ENCODE measurements at regions of chr10 and their contacts with region 1.

Region 1: DNA sequence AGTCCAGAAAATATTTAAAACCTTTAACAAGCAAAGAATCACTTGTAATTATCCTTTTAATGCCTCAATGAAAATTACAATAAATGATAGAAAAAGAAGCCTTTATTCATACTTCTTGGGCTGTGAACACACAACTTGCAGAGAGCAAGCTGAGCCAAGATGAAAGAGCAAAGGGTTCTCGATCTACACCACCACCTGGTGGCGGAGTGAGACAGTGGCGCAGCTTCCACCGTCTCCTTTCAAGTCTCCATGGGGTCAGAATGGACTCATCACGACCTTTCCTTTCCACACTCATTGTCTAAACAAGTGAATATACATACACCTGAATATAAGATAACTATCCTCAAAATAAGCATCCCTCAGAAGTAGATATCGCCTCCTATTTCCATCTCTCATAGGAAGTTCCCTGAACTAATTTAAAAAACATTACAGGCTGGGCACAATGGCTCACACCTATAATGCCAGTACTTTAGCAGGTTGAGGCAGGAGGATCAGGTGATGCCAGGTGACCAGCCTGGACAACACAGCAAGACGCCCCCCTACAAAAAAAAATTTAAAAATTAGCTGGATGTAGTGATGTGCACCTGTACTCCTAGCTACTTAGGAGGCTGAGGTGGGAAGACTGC is 40.7 kb downstream of the ATE1 start:
- DNase-seq: peak; percentile 68
- ATAC-seq: peak; percentile 87
- H3K4me3 ChIP-seq: no peak overlapping the region
- H3K27ac ChIP-seq: no peak overlapping the region
- H3K4me1 ChIP-seq: peaks cover 8% of the 10 kb centered on the region; the same call in 1 of the 2 replicates
- H3K27me3 ChIP-seq: no peaks in the 10 kb centered on the region
- CTCF ChIP-seq: peak; percentile 78

Region 2: DNA sequence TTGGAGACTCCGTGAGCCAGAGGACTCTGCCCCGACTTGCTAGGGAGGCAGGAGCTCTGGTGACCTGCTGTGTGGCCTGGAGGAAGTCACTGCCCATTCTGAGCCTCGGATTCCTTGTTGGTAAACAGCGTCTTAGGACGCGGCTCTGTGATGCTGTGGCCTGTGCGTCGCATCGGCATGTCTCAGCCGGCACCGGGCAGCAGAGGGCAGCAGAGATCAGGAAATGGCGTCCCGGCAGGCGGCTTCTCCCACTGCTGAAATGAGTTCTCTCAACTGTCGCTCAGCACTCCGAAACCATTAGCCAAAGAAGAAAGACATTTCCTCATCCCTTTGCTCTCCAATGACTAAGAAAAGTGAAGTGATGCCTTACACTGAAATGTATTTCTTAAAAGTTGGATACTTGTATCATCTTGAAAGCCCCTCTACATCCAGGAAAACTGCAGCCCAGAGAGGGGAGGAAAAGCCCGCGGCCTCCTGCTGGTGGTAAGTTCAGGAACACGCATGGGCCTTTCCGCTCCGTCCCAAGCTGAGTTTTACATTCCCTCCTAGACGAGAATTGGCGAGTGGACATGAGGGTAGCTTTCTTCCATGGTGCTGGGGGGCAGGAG is 944.2 kb before region 1 on chr10:
- CTCF ChIA-PET with region 1: no interaction called
- POLR2A ChIA-PET with region 1: no interaction called
- intact Hi-C with region 1: loop called (anchors 2 kb)
- DNase-seq: peak; percentile 71
- ATAC-seq: peak; percentile 98
- H3K4me3 ChIP-seq: no peak overlapping the region
- H3K27ac ChIP-seq: no peak overlapping the region
- H3K4me1 ChIP-seq: no peaks in the 10 kb centered on the region
- H3K27me3 ChIP-seq: no peaks in the 10 kb centered on the region
- CTCF ChIP-seq: peak; percentile 81

Region 3: GRCh38 chr10:121608469-121609190 is 278.5 kb before region 1 on chr10:
- CTCF ChIA-PET with region 1: no interaction called
- POLR2A ChIA-PET with region 1: no interaction called
- intact Hi-C with region 1: loop called (anchors 10 kb)
- DNase-seq: peak; percentile 48
- ATAC-seq: peak; percentile 88
- H3K4me3 ChIP-seq: no peak overlapping the region
- H3K27ac ChIP-seq: no peak overlapping the region
- H3K4me1 ChIP-seq: no peaks in the 10 kb centered on the region
- H3K27me3 ChIP-seq: peaks cover 7% of the 10 kb centered on the region; the same call in 1 of the 2 replicates
- CTCF ChIP-seq: peak; percentile 78

Region 4: DNA sequence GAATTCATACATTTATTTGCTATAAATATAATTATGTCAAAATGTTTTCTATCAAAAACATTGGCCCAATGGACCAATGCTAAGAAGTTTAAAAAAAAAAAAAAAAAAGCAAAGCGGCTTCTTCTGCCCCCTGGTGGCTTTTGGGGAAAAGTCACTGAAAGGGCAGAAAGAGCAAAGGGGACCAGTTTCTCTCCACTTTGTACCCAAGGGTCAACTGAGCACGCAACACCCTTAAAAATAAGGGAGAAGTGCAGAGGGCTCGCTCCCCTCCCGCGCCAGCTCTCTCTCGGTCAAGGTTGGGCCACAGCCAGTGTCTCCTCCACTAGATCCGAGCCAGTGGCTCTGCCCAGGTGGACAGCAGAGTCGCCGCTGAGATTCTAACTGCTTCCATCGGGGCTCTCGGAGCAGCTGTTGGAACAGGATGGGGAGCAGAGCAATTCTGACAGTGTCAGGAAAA is 152.5 kb before region 1 on chr10:
- CTCF ChIA-PET with region 1: no interaction called
- POLR2A ChIA-PET with region 1: no interaction called
- intact Hi-C with region 1: loop called (anchors 10 kb)
- DNase-seq: peak; percentile 37
- ATAC-seq: 0 out of 2 replicates have a peak, but pooled peaks have one; percentile 29
- H3K4me3 ChIP-seq: 0 out of 2 replicates have a peak overlapping the region, but pooled peaks have one; percentile 21
- H3K27ac ChIP-seq: no peak overlapping the region
- H3K4me1 ChIP-seq: no peaks in the 10 kb centered on the region
- H3K27me3 ChIP-seq: no peaks in the 10 kb centered on the region
- CTCF ChIP-seq: peak; percentile 69

Region 5: DNA sequence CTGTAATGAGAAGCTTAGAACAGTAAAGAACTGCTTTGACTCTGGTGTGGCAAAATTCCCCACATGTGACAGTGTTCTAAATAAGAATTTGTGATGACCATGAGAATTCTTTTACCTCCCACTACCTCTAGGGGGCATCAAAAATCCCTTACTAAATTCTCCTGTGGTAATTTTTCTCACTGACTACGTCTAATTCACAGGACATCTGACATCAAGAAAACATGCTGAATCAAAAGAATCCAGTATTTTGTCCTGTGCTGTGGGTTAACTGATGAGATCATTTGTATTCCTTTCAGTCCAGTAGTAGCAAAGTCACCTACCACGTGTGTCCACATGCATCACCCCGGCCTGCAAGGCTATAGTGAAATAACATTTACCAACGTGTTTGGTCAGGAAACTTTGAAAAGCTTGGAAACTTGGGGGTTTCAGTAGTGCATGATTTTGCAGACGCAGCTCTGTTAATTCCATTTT is 63.1 kb before region 1 on chr10:
- CTCF ChIA-PET with region 1: no interaction called
- POLR2A ChIA-PET with region 1: no interaction called
- intact Hi-C with region 1: loop called (anchors 1 kb)
- DNase-seq: peak; percentile 62
- ATAC-seq: peak; percentile 43
- H3K4me3 ChIP-seq: no peak overlapping the region
- H3K27ac ChIP-seq: no peak overlapping the region
- H3K4me1 ChIP-seq: peaks cover 7% of the 10 kb centered on the region; the same call in 1 of the 2 replicates
- H3K27me3 ChIP-seq: no peaks in the 10 kb centered on the region
- CTCF ChIP-seq: peak; percentile 68

Region 6: DNA sequence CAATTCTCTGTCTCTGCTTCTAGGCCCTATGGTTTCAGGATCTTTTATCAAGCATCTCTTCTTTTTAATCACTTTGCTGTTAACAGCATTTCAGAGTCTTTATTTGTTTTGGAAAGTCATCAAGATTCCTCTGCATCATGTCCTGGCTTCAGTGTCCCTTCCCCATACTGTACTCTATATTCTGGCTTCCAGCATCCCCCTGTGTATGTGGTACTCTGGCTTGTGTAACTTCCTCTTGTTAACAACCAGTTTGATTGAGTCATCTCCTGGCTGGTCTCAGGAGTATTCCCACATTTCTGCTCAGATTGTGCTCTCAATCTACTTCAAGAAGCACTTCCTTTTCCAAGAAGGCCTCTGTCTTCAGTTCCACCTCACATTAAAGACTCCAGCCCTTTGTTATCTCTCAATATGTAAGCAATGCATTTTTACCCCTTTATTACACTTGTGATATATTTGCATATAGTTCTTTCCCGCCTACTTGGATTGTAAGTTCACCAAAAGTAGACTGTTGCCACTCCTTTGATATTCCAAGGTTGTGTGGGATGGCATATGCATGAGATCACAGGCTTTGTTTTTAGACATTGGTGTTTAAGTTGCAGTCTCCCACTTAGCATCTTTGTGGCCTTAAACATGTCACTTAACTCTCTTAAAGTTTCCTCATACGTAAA is 55.8 kb after region 1 on chr10:
- CTCF ChIA-PET with region 1: no interaction called
- POLR2A ChIA-PET with region 1: no interaction called
- intact Hi-C with region 1: no loop called
- DNase-seq: peak; percentile 88
- ATAC-seq: peak; percentile 100
- H3K4me3 ChIP-seq: no peak overlapping the region
- H3K27ac ChIP-seq: peak overlapping the region; percentile 90
- H3K4me1 ChIP-seq: peaks cover 16% of the 10 kb centered on the region
- H3K27me3 ChIP-seq: no peaks in the 10 kb centered on the region
- CTCF ChIP-seq: no peak

Region 7: DNA sequence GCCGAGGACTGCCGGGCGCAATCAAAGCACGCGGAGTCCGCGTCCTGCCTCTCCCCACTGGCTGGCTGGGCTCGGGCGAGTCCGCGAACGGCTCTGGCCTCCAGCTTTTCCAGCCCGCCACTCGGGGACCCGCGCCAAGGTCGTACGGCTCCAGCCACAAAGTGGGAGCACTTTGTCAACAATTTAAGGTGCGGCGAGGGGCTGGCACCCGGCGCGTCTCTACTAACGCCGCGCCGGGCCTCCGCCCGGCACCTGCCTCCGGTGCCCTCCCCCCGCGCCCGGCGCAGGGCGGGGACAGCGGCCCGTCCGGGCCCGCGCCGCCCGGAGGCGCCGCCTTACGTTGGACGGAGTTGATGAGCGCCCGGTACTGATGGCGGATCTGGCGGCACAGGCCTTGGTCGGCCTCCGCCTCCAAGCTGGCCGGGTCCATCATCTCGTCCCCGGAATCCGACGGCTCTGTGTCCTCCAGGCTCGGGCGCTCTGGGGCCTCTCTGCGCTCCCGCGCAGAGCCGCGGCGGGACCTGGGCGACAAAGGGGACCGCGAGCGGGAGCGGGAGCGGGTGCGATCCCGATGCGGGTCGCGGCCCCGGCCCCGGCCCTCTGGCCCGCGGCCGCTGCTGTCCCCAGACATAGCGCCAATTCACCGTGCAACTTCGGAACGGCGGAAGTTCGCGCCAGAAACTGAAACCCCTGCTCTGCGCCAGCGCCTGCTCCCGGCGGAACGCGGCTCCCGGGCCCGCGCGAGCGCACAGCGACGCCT is 87.6 kb after region 1 on chr10 and contains the start of gene NSMCE4A:
- CTCF ChIA-PET with region 1: no interaction called
- POLR2A ChIA-PET with region 1: no interaction called
- intact Hi-C with region 1: no loop called
- DNase-seq: peak; percentile 71
- ATAC-seq: peak; percentile 81
- H3K4me3 ChIP-seq: peak within 1 kb of the TSS; percentile 90
- H3K27ac ChIP-seq: peak within 1 kb of the TSS; percentile 90
- H3K4me1 ChIP-seq: peaks cover 7% of the 10 kb centered on the region; the same call in 1 of the 2 replicates
- H3K27me3 ChIP-seq: no peaks in the 10 kb centered on the region
- CTCF ChIP-seq: peak; percentile 72
- total RNA-seq, gene NSMCE4A: 46.3 and 47.3 TPM in 2 replicates

Measured in PC-3 (cell line).